Mammary epithelial cell (primary cell): ENCODE measurements at regions of chr15 and their contacts with region 1.

Region 1: GRCh38 chr15:91055548-91056331 is 33.3 kb upstream of the VPS33B start:
- DNase-seq: peak; percentile 67
- H3K4me3 ChIP-seq: no peak overlapping the region
- H3K27ac ChIP-seq: no peak overlapping the region
- H3K4me1 ChIP-seq: no peaks in the 10 kb centered on the region
- H3K27me3 ChIP-seq: peaks cover 5% of the 10 kb centered on the region
- CTCF ChIP-seq: peak; percentile 89 to 90

Region 2: DNA sequence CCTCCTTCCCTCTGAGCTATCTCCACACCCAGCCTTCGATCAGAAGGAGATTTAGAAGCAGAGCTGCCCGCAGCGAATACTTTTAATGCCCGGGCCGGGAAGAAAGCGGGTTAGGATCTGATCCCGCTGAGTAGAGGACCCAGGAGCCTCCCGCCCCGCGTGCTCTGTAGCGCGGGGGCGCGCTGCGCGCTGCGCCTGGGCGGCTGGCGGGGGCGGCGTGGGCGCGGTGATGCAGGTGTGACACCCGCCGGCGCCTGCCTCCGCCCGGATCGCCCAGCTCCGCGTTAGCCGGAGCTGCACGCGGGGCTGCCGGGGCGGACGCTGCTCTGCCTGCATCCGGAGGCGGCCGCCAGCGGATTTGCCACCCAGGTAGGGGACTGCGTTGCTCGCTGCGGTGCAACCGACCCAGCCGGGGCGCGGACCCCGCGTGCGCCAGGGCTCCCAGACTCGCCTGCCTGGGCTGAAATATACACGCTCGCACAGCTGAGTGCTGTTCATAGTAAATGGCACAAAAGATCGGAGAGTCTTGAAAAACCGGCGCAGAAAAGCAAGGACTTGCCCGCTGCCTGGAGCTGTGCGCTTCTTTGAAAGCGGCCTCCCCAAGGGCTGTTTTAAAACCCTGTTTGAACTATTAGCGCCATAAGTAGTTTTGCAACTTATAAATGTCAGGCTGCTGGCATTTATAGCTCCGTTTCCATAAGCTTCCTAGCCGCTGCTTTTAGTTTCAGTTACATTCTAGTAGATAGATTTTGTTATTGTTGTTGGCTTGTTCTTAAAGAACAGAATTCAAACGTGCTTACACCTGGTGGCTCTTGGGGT is 44.5 kb after region 1 on chr15 and contains the start of gene SV2B:
- CTCF ChIA-PET with region 1: no interaction called
- dilution Hi-C with region 1: no loop called
- in situ Hi-C with region 1: no loop called
- intact Hi-C with region 1: loop called (anchors 5 kb)
- DNase-seq: peak; percentile 36
- H3K4me3 ChIP-seq: peak within 1 kb of the TSS; percentile 48 to 69 (median 59)
- H3K27ac ChIP-seq: no peak within 1 kb of the TSS
- H3K4me1 ChIP-seq: peaks cover 13% of the 10 kb centered on the region
- H3K27me3 ChIP-seq: peaks cover 14% of the 10 kb centered on the region
- CTCF ChIP-seq: no peak
- total RNA-seq, gene SV2B: 0.33 to 0.40 TPM

Region 3: GRCh38 chr15:91142114-91142731 is 86.5 kb after region 1 on chr15:
- CTCF ChIA-PET with region 1: no interaction called
- dilution Hi-C with region 1: no loop called
- in situ Hi-C with region 1: no loop called
- intact Hi-C with region 1: loop called (anchors 5 kb)
- DNase-seq: peak; percentile 5
- H3K4me3 ChIP-seq: no peak overlapping the region
- H3K27ac ChIP-seq: no peak overlapping the region
- H3K4me1 ChIP-seq: no peaks in the 10 kb centered on the region
- H3K27me3 ChIP-seq: no peaks in the 10 kb centered on the region
- CTCF ChIP-seq: peak; percentile 45 to 58

Region 4: DNA sequence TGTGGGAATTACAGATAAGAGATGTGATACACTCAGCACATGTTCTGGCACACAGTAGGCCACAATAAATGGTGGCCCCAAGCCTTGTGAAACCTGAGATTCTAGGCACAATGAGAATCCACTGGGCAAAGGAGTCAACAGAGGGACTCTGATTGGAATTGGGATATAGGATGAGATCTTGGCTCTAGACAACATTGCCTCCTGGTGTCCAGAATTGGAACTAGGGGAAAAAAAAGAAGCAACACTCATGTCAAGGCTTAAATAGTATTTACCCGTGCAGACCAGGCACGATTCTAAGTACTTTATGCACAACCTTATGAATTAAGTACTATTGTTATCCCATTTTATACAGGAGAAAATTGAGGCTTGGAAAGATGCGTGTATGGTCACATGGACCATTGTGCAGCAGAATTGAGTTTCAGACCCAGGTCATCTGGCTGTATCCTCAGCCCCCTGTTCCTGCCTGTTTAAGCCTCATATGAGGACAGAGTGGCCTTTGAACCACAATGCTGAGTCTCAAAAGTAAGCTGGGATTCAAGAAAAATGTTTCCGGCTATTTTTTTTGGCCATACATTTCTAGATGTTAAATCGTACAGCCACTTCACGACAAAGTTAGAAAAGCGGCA is 169.1 kb after region 1 on chr15:
- CTCF ChIA-PET with region 1: no interaction called
- dilution Hi-C with region 1: no loop called
- in situ Hi-C with region 1: loop called (anchors 5 kb)
- intact Hi-C with region 1: loop called (anchors 1 kb)
- DNase-seq: peak; percentile 37
- H3K4me3 ChIP-seq: no peak overlapping the region
- H3K27ac ChIP-seq: no peak overlapping the region
- H3K4me1 ChIP-seq: no peaks in the 10 kb centered on the region
- H3K27me3 ChIP-seq: peaks cover 3% of the 10 kb centered on the region
- CTCF ChIP-seq: peak; percentile 63 to 85

Region 5: DNA sequence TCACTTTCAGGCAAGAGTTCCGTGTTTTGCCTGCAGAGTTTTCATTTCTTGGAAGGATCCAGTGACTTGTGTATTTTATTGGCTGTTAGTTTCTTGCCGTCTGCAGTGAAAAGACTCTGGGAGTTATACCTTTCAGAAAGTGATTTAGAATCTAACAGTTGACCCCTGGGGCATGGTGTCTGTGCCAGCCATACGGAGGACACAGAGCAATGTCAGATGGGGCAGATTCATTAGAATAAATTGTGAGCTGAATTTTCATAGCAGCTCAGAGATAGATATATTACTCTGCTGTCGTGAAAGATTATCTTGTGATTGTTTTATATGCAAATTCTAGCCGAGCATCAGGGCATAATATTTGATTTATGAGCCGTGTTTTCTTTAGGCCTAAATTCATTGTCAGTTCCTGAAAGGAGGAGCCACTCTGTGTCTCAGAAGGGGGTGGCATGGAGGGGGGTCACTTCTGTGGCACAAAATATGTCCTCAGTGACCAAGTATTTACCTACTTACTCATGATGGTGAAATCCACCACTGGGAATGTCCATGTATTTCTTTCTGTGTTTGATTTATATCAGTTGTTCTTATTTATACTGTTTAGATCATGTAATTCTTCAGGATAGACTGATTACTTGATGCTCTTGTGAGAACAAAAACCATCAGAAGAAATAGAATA is 176.1 kb after region 1 on chr15:
- CTCF ChIA-PET with region 1: no interaction called
- dilution Hi-C with region 1: no loop called
- in situ Hi-C with region 1: loop called in 1 of 2 experiments (anchors 5 kb)
- intact Hi-C with region 1: no loop called
- DNase-seq: no peak
- H3K4me3 ChIP-seq: no peak overlapping the region
- H3K27ac ChIP-seq: no peak overlapping the region
- H3K4me1 ChIP-seq: no peaks in the 10 kb centered on the region
- H3K27me3 ChIP-seq: no peaks in the 10 kb centered on the region
- CTCF ChIP-seq: no peak